AG04449 (cell line): ENCODE measurements at regions of chr10 and their contacts with region 1.

Region 1: DNA sequence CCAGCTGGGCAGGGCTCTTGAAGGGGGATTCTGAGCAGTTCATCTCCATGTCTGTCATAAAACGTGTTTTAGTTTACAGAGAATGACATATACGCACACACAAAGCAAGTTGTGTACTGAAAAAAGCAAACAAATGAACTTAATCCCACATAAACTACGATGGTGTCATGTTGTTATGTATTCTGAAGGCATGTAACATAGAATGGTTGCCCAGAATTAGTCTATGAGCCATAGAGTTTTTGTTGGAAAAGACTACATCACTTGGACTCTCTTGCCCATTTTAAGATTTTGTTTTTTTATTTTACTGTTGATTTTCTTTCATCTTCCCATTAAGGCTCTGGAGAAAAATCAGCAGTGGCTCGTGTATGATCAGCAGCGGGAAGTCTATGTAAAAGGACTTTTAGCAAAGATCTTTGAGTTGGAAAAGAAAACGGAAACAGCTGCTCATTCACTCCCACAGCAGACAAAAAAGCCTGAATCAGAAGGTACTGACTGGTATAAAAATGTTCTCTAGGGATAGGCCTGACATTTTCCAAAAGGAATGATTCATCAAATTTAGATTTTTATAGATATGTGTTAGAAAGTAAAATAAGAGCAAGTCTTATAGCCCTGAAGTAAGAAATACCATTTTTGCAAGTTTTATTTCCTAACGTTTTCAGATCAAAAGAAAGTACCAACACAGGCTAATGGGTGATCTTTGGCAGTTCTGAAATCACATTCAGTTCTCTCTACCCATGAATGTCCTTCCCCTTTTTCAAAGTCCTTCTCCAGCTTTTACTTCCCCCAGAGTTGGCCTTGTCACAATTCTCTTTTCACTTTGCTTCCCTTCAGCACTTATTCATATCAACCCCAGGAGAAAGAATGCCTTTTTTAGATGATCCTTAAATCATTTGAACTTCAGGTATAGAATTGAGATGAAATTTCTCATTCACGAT is 18.9 kb downstream of the CEP55 start:
- DNase-seq: no peak
- H3K4me3 ChIP-seq: no peak overlapping the region
- CTCF ChIP-seq: no peak

Region 2: DNA sequence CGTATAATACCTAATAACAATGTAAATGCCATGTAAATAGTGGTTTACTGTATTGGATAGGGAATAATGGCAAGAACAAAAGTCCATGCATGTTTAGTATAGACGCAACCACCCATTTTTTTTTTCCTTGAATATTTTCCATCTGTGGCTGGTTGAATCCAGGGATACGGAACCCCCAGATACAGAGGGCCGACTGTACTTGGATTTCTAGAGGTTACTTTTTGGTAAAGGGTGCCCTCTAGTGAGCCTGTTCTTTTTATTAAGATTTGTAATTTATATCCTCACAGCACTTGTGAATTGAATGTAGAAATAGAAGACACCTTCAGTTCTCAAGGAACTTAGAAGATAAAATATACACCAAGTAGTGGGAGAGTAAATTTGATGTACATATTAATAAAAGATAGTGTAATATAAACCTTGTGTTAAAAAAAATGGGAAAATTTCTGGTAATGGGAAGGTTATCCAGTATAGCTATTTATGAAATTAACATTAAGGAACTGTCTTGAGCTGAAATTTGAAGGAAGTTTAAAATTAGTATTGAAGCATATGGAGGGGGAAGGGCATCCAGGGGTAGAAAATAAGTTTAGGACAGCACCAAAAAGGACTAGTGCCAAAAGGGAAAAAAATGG is 635.0 kb before region 1 on chr10:
- CTCF ChIA-PET with region 1: interaction called, 51 read pairs
- POLR2A ChIA-PET with region 1: no interaction called
- DNase-seq: no peak
- H3K4me3 ChIP-seq: no peak overlapping the region
- CTCF ChIP-seq: peak; percentile 22

Region 3: GRCh38 chr10:93006435-93007039 is 508.8 kb before region 1 on chr10:
- CTCF ChIA-PET with region 1: interaction called, 40 read pairs
- POLR2A ChIA-PET with region 1: no interaction called
- DNase-seq: no peak
- H3K4me3 ChIP-seq: no peak overlapping the region
- CTCF ChIP-seq: peak; percentile 56

Region 4: GRCh38 chr10:93352638-93353383 is 162.5 kb before region 1 on chr10:
- CTCF ChIA-PET with region 1: interaction called, 17 read pairs
- POLR2A ChIA-PET with region 1: no interaction called
- DNase-seq: no peak
- H3K4me3 ChIP-seq: no peak overlapping the region
- CTCF ChIP-seq: peak; percentile 17

Region 5: DNA sequence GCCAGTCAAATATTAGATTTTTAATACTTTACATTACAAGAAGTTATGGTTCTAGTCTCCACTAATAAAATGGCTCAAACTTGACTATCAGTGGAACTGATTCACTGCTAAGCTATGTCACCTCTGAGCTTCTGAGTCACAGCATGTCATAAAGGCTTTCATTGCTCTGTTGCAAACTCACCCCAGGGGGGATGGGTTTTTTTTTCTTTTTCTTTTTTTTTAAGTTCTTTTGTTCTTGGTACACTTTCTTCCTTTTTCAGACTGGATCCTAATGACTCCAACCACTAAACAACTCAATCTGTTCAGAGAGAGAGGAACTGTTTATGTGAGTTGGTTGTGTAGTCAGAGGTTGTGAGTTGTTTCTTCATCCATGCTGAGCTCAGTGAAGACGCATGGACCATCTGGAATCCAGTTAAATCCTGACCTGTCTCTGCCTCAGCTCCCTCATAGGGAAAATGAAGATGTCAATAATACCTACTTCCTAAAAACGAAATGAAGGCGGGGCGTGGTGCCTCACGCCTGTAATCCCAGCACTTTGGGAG is 44.2 kb before region 1 on chr10:
- CTCF ChIA-PET with region 1: no interaction called
- POLR2A ChIA-PET with region 1: no interaction called
- DNase-seq: peak; percentile 70
- H3K4me3 ChIP-seq: no peak overlapping the region
- CTCF ChIP-seq: no peak

Region 6: DNA sequence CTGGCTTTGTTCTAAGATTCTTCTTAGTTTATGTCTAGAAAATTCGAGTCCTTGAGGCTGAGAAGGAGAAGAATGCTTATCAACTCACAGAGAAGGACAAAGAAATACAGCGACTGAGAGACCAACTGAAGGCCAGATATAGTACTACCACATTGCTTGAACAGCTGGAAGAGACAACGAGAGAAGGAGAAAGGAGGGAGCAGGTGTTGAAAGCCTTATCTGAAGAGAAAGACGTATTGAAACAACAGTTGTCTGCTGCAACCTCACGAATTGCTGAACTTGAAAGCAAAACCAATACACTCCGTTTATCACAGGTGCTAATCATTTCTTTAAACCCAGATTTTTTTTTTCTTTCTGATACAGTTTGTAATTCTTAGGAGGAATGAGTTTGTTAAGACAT is 12.3 kb before region 1 on chr10:
- CTCF ChIA-PET with region 1: interaction called, 34 read pairs
- POLR2A ChIA-PET with region 1: no interaction called
- DNase-seq: no peak
- H3K4me3 ChIP-seq: no peak overlapping the region
- CTCF ChIP-seq: no peak

Region 7: GRCh38 chr10:93630625-93631557 is 115.6 kb after region 1 on chr10:
- CTCF ChIA-PET with region 1: no interaction called
- POLR2A ChIA-PET with region 1: no interaction called
- DNase-seq: no peak
- H3K4me3 ChIP-seq: no peak overlapping the region
- CTCF ChIP-seq: no peak

Region 8: GRCh38 chr10:93680412-93681047 is 165.2 kb after region 1 on chr10:
- CTCF ChIA-PET with region 1: interaction called, 11 read pairs
- POLR2A ChIA-PET with region 1: no interaction called
- DNase-seq: no peak
- H3K4me3 ChIP-seq: no peak overlapping the region
- CTCF ChIP-seq: peak; percentile 3

Region 9: GRCh38 chr10:93838278-93838677 is 322.9 kb after region 1 on chr10:
- CTCF ChIA-PET with region 1: no interaction called
- POLR2A ChIA-PET with region 1: no interaction called
- DNase-seq: no peak
- H3K4me3 ChIP-seq: no peak overlapping the region
- CTCF ChIP-seq: no peak